HEK293 (cell line): ENCODE measurements at regions of chr21 and their contacts with region 1.

Region 1: DNA sequence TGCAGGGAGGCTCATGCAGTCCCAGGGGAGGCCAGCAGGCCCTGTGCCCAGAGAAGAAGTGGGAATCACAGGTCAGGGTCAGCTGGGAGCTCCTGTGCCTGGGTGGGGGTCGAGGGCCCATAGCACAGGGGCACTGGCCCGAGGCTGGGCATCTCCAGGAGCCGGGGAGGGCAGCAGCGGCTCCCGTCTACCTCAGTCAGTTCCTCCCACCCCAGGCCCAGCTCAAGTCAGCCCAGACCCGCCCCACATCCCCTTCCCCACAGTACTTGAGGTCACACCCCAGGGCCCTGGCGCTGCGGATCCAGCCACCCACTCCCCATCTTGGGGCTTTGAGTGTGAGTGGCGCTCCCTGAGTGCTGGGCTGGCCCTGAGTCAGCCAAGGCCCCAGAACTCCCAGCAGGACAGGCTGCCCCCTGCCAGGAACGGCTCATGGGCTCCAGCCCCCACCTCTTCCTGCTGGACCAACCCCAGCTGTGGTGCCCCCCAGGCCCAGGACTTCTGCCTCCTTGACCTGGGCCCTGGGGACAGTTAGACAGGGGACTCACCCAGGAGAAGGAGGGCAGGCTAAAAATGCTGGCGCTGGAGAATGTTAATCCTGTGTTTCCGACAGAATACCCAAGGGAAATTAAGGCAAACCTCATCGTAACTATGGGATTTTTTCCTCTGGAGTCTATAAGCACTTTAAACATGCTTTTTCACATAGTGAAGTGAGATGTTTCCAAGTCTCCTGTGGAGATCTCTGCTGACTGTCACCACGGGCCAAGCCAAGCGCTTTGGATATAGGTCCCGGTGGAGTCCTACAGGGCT is 68.8 kb upstream of the COL6A1 start:
- H3K4me3 ChIP-seq: no peak overlapping the region
- H3K27ac ChIP-seq: no peak overlapping the region
- H3K4me1 ChIP-seq: peaks cover 4% of the 10 kb centered on the region
- CTCF ChIP-seq: no peak

Region 2: DNA sequence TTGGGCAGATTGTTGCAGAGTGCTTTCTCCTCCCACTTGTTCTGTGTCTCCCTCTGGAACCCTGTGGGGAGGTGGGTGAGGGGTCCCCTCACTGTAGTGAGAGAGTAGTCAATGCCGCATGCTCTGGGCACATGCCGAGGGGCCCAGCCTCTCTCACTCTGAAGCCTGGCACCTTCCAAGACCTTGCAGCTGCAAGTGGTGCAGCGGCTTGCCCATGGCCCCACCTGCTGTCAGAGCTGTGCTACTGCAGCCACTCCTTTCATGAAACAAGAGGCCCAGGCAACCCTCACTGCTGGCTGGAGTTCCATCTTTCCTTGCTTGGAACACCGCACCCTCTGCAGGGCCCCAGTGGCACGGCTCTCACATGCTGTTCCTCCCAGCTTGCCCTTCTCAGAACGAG is 10.3 kb after region 1 on chr21:
- CTCF ChIA-PET with region 1: interaction called, 10 read pairs
- POLR2A ChIA-PET with region 1: no interaction called
- H3K4me3 ChIP-seq: no peak overlapping the region
- H3K27ac ChIP-seq: no peak overlapping the region
- H3K4me1 ChIP-seq: no peaks in the 10 kb centered on the region
- CTCF ChIP-seq: no peak